ENCODE measurements at regions of chr12 and their contacts with region 1.

Region 1: DNA sequence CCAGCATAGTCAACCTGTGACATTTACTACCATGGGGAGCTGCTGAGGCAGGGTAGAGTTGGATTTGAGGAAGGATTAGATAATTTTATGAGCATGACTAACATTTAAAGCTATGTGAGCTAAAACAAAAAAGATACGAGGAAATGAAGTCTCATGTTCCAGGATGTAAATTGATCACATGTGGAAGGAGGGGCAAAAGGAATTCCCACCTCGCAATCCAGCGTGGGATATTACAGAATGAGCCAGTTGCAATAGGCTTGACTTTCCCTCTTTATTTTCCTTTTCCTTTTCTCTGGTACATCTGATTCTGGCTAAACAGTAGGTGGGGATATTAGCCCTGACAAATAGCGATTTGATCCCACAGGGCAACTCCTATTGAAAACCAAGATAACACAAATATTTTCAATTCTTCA is 214.9 kb upstream of the HMGA2 start:
- DNase-seq: peak; percentile 79
- H3K4me3 ChIP-seq: no peak overlapping the region
- H3K27ac ChIP-seq: peak overlapping the region; percentile 25
- H3K4me1 ChIP-seq: peaks cover 73% of the 10 kb centered on the region
- H3K27me3 ChIP-seq: no peaks in the 10 kb centered on the region
- CTCF ChIP-seq: peak; percentile 5 to 8
- POLR2A ChIP-seq: no peak

Region 2: DNA sequence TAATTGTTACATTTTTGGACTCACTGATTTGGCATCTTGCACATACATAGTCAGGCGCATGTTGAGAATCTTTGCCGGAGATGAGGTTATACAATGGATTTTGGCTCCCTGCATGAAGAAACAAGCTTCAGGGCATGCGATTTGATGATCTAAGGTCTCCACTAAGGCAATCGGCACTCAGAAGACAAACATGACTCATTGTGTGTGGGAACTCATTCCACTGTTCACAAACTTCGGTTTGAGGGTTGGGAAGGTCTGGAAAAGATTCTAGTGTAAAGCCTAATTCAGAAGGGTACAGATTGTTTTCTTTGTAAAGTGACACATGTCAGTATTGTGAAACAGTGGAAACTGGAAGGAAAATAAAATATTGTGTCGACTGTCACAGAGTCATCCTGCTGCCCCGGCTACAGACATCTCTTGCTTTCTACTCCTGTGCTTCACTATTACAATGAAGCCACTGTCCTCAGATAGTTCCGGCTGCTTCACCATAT is 22.3 kb after region 1 on chr12:
- CTCF ChIA-PET with region 1: interaction called, 9 read pairs
- POLR2A ChIA-PET with region 1: interaction called, 3 read pairs
- dilution Hi-C with region 1: no loop called
- intact Hi-C with region 1: loop called (anchors 1 kb)
- DNase-seq: peak; percentile 94
- H3K4me3 ChIP-seq: no peak overlapping the region
- H3K27ac ChIP-seq: peak overlapping the region; percentile 87
- H3K4me1 ChIP-seq: peaks cover 56% of the 10 kb centered on the region
- H3K27me3 ChIP-seq: no peaks in the 10 kb centered on the region
- CTCF ChIP-seq: no peak
- POLR2A ChIP-seq: peak; percentile 49

Region 3: GRCh38 chr12:65649126-65649525 is 39.8 kb after region 1 on chr12:
- CTCF ChIA-PET with region 1: no interaction called
- POLR2A ChIA-PET with region 1: interaction called, 8 read pairs
- dilution Hi-C with region 1: no loop called
- intact Hi-C with region 1: loop called (anchors 1 kb)
- DNase-seq: peak; percentile 98
- H3K4me3 ChIP-seq: no peak overlapping the region
- H3K27ac ChIP-seq: peak overlapping the region; percentile 95
- H3K4me1 ChIP-seq: peaks cover 38% of the 10 kb centered on the region
- H3K27me3 ChIP-seq: no peaks in the 10 kb centered on the region
- CTCF ChIP-seq: no peak
- POLR2A ChIP-seq: no peak

Region 4: DNA sequence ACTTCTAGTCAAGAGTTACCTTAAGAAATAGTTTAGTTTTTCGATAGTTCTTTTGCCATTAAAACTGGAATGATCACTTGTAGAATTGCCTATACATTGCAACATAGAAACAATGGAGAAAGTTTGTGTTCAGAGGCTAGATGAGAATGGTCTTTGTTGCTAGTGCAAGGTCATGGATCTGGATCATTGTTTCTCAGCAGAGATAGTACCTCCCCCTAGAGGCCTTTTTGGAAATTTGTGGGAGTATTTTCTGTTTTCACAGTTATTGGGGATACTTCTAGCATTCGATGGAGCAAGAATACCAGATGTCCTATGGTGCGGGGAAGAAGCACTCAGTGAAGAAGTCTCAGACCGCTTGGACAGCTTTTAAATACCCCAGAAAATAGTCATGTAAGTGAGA is 76.1 kb after region 1 on chr12:
- CTCF ChIA-PET with region 1: interaction called, 3 read pairs
- POLR2A ChIA-PET with region 1: no interaction called
- dilution Hi-C with region 1: no loop called
- intact Hi-C with region 1: loop called (anchors 1 kb)
- DNase-seq: peak; percentile 63
- H3K4me3 ChIP-seq: no peak overlapping the region
- H3K27ac ChIP-seq: no peak overlapping the region
- H3K4me1 ChIP-seq: no peaks in the 10 kb centered on the region
- H3K27me3 ChIP-seq: no peaks in the 10 kb centered on the region
- CTCF ChIP-seq: peak; percentile 52 to 63
- POLR2A ChIP-seq: no peak

Measured in endothelial cell of umbilical vein (primary cell).